ENCODE measurements at regions of chr1 and their contacts with region 1.

Region 1: GRCh38 chr1:172211221-172211620 is 209.3 kb upstream of the C1orf105 start:
- DNase-seq: no peak
- H3K4me3 ChIP-seq: no peak overlapping the region
- H3K4me3 Mint-ChIP-seq: no peak overlapping the region
- H3K27ac ChIP-seq: no peak overlapping the region
- H3K27ac Mint-ChIP-seq: no peak overlapping the region
- H3K4me1 ChIP-seq: no peaks in the 10 kb centered on the region
- H3K4me1 Mint-ChIP-seq: peaks cover 0 to 8% (median 2%) of the 10 kb centered on the region in 3 donors
- H3K27me3 ChIP-seq: no peaks in the 10 kb centered on the region
- H3K27me3 Mint-ChIP-seq: peaks cover 0 to 4% of the 10 kb centered on the region in 2 donors

Region 2: GRCh38 chr1:172254521-172255222 is 43.5 kb after region 1 on chr1:
- CTCF ChIA-PET with region 1: no interaction called
- POLR2A ChIA-PET with region 1: no interaction called
- DNase-seq: no peak
- H3K4me3 ChIP-seq: no peak overlapping the region
- H3K4me3 Mint-ChIP-seq: no peak overlapping the region
- H3K27ac ChIP-seq: no peak overlapping the region
- H3K27ac Mint-ChIP-seq: peak overlapping the region in 2 of 8 donors; percentile 5 to 11
- H3K4me1 ChIP-seq: no peaks in the 10 kb centered on the region
- H3K4me1 Mint-ChIP-seq: peaks cover 12 to 20% (median 17%) of the 10 kb centered on the region in 3 donors
- H3K27me3 ChIP-seq: no peaks in the 10 kb centered on the region
- H3K27me3 Mint-ChIP-seq: peaks cover 0 to 1% of the 10 kb centered on the region in 2 donors

Region 3: GRCh38 chr1:172561252-172561651 is 350.0 kb after region 1 on chr1:
- CTCF ChIA-PET with region 1: no interaction called
- POLR2A ChIA-PET with region 1: interaction called, 11 read pairs
- DNase-seq: no peak
- H3K4me3 ChIP-seq: no peak overlapping the region
- H3K4me3 Mint-ChIP-seq: no peak overlapping the region
- H3K27ac ChIP-seq: no peak overlapping the region
- H3K27ac Mint-ChIP-seq: peak overlapping the region in 3 of 8 donors; percentile 2 to 61 (median 23)
- H3K4me1 ChIP-seq: no peaks in the 10 kb centered on the region
- H3K4me1 Mint-ChIP-seq: peaks cover 10 to 26% (median 18%) of the 10 kb centered on the region in 3 donors
- H3K27me3 ChIP-seq: no peaks in the 10 kb centered on the region
- H3K27me3 Mint-ChIP-seq: no peaks in the 10 kb centered on the region

Measured in CD8-positive, alpha-beta memory T cell (primary cell).